Sigmoid colon (tissue), 7 donors: ENCODE measurements at regions of chr17 and their contacts with region 1.

Region 1: DNA sequence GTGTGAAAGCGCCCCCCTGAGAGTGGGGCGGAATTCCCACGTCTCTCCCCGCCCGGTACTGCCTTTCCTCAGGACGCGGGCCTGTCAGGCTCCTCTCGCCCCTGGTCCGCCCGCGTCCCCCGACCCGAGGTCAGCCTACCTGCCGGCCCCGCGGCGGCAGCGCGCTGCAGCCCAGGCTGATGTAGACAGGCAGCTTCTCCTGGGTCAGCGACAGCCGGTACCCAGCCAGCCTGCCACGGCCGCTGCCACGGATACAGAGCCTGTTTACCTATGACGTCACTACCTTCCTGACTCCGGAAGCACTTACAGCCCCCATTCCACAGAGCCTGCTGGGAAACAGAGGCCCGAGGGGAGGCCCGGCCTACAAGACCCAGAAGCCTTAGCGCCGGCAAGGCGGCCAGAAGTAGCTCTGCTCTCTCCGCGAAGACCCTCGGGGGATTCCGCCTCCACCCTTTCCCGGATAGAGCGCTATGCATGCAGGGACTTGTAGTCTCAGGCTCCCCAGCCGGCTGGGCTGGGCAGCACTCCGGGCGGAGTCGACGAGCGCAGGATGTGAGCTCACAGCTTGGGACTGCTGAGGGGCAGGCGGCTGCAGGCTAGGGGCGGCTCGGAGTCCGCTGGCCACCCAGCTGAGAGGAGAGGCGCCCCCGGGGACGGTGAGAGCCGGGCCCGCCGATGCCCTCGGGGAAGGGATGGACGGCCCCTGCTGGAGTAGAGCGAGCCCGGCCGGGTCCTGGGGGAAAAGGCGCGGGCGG is at the starts of genes IFT20 and TNFAIP1:
- DNase-seq: peak; percentile 100
- H3K4me3 ChIP-seq: peak within 1 kb of the TSS; percentile 72 to 99 (median 81)
- H3K27ac ChIP-seq: peak within 1 kb of the TSS; percentile 93 to 95 (median 94)
- H3K4me1 ChIP-seq: peaks cover 0 to 48% (median 41%) of the 10 kb centered on the region in 4 donors
- H3K27me3 ChIP-seq: no peaks in the 10 kb centered on the region
- CTCF ChIP-seq: no peak
- EP300 ChIP-seq: peak in 1 of 4 donors; percentile 66
- POLR2A ChIP-seq: peak; percentile 85 to 92
- total RNA-seq, gene IFT20: 48.5 to 73.6 (median 58.1) TPM
- total RNA-seq, gene TNFAIP1: 14.6 to 20.8 (median 17.1) TPM

Region 2: GRCh38 chr17:27466743-27467375 is 868.5 kb before region 1 on chr17:
- intact Hi-C with region 1: no loop called
- DNase-seq: no peak
- H3K4me3 ChIP-seq: no peak overlapping the region
- H3K27ac ChIP-seq: peak overlapping the region in 1 of 4 donors; percentile 14
- H3K4me1 ChIP-seq: peaks cover 0 to 4% (median under 1%) of the 10 kb centered on the region in 4 donors
- H3K27me3 ChIP-seq: no peaks in the 10 kb centered on the region
- CTCF ChIP-seq: no peak
- EP300 ChIP-seq: no peak
- POLR2A ChIP-seq: no peak

Region 3: GRCh38 chr17:28318759-28319660 is 16.4 kb before region 1 on chr17 and contains the start of gene TMEM97:
- intact Hi-C with region 1: loop called (anchors 2 kb)
- DNase-seq: peak; percentile 98
- H3K4me3 ChIP-seq: peak within 1 kb of the TSS; percentile 51 to 68 (median 58)
- H3K27ac ChIP-seq: peak within 1 kb of the TSS; percentile 64 to 79 (median 76)
- H3K4me1 ChIP-seq: peaks cover 0 to 22% (median 19%) of the 10 kb centered on the region in 4 donors
- H3K27me3 ChIP-seq: no peaks in the 10 kb centered on the region
- CTCF ChIP-seq: no peak
- EP300 ChIP-seq: no peak
- POLR2A ChIP-seq: no peak
- total RNA-seq, gene TMEM97: 5.8 to 10.9 (median 9.2) TPM

Region 4: DNA sequence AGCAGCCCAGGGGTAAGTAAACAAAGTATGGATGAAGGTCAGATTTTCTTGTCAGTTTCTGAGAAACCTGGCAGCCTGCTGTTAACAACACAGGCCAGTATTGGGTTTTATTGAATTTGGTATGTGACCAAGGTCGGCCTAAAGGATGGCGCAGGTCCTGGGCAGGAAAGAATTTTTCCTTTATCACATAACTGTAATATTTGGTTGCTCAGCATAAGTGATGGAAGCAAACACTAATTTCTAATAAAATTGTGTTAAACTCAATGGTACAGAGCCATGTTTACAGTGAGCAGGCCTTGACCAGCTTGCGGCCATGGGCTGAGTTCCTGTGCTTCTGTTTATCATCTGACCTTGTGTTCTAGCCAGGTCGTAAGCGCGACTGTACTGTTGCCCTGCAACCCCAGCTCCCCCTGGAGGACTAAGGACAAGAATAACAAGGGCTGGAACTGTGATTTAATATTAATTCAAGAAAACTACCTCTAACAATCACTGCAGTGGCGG is 11.4 kb after region 1 on chr17:
- intact Hi-C with region 1: no loop called
- DNase-seq: no peak
- H3K4me3 ChIP-seq: no peak overlapping the region
- H3K27ac ChIP-seq: peak overlapping the region in 2 of 4 donors; percentile 24 to 40
- H3K4me1 ChIP-seq: peaks cover 0 to 11% (median 0%) of the 10 kb centered on the region in 4 donors
- H3K27me3 ChIP-seq: no peaks in the 10 kb centered on the region
- CTCF ChIP-seq: no peak
- EP300 ChIP-seq: no peak
- POLR2A ChIP-seq: no peak

Region 5: DNA sequence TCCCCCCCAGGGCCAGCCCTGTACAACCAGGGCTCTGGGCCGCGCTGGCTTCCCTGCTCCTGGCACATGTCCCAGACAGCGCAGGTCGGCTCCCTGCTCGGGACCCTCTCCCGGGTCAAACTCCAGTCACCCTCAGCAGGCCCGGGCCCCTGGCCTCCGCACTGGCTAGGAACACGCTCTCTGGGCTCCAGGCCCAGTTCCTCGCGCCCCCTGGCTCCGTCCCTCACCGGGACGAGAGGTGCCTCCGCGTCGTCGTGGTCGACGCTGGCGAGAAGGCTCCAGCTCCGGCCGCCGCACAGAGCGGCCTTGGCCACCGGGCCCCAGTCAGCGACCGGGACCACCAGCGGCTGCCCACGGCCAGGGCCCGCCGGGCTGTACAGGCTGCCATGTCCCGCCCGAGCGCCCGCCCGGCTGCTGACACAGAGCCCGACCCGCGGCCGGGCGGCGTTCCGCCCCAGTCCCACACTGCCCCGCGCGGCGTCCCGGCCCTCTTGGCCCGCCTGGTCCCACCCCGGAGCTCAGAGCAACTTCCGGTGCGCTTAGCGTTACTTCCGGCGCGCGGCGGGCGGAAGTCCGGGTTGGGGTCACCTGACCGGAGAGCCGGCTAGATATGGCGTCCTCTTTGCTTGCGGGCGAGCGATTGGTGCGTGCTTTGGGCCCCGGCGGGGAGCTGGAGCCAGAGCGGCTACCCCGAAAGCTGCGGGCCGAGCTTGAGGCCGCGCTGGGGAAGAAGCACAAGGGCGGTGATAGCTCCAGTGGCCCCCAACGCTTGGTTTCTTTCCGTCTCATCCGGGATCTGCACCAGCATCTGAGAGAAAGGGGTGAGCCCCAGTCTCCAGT is 21.9 kb after region 1 on chr17 and contains the start of gene POLDIP2:
- intact Hi-C with region 1: loop called (anchors 1 kb)
- DNase-seq: peak; percentile 98
- H3K4me3 ChIP-seq: peak within 1 kb of the TSS; percentile 69 to 99 (median 89)
- H3K27ac ChIP-seq: peak within 1 kb of the TSS; percentile 85 to 97 (median 92)
- H3K4me1 ChIP-seq: peaks cover 0 to 33% (median 26%) of the 10 kb centered on the region in 4 donors
- H3K27me3 ChIP-seq: no peaks in the 10 kb centered on the region
- CTCF ChIP-seq: no peak
- EP300 ChIP-seq: peak in 1 of 4 donors; percentile 70
- POLR2A ChIP-seq: peak; percentile 67 to 71
- total RNA-seq, gene POLDIP2: 55.8 to 65.6 (median 59.3) TPM

Region 6: GRCh38 chr17:28405632-28406472 is 70.5 kb after region 1 on chr17 and contains the start of gene SLC46A1:
- intact Hi-C with region 1: no loop called
- DNase-seq: peak; percentile 81
- H3K4me3 ChIP-seq: peak within 1 kb of the TSS; percentile 52 to 84 (median 73)
- H3K27ac ChIP-seq: peak within 1 kb of the TSS; percentile 54 to 67 (median 55)
- H3K4me1 ChIP-seq: peaks cover 0 to 21% (median 19%) of the 10 kb centered on the region in 4 donors
- H3K27me3 ChIP-seq: no peaks in the 10 kb centered on the region
- CTCF ChIP-seq: no peak
- EP300 ChIP-seq: no peak
- POLR2A ChIP-seq: no peak
- total RNA-seq, gene SLC46A1: 2.7 to 8.6 (median 5.1) TPM

Region 7: DNA sequence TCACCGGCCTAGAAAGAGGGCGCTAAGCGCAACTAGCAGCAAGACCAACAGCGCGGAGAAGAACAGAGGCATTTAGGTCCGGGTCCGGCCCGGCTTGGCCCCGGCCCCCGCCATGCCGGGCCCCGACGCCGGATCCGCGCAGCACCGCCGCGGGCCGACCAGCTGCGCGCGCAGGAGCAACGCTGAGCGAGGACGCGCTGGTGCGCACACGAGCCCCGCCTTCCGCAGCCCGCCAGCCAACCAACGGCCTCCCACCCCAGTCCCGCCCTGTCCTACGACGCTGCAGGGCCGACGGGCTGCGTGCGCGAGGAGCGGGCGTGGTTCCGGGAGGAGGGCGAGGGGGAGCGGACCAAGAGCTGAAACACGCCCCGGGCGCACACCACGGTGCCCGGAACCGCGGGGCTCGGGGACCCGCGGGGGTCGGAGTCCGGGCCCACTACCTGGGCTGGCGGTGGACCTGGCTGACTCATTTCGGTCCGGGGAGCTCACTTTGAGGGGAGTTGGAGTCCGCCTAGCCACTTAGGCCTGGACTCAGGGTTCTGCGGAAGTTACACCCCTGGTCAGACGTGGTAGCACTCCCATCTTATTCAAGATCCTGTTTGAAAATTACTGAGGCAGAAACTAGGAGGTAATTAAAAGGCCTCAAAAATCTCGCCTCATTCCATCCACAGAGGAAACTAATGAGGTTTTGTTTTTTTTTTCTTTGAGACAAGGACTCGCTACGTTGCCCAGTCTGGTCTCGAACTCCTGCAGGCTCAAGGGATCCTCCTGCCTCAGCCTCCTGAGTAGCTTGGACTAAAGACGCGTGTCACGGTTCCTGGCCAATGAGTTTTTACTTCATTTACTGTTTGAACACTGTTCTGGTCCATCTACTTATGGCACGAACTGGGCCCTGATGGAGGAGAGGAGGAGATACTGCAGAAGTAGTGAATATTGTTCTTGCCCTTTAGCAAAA is 309.9 kb after region 1 on chr17 and contains the start of gene BLTP2:
- intact Hi-C with region 1: no loop called
- DNase-seq: peak; percentile 98
- H3K4me3 ChIP-seq: peak within 1 kb of the TSS; percentile 94 to 99 (median 98)
- H3K27ac ChIP-seq: peak within 1 kb of the TSS; percentile 91 to 97 (median 95)
- H3K4me1 ChIP-seq: peaks cover 0 to 40% (median 32%) of the 10 kb centered on the region in 4 donors
- H3K27me3 ChIP-seq: no peaks in the 10 kb centered on the region
- CTCF ChIP-seq: peak in 1 of 4 experiments; percentile 37
- EP300 ChIP-seq: no peak
- POLR2A ChIP-seq: peak; percentile 68 to 88
- total RNA-seq, gene BLTP2: 71.0 to 84.5 (median 80.3) TPM

Region 8: GRCh38 chr17:28951991-28952975 is 616.9 kb after region 1 on chr17:
- intact Hi-C with region 1: loop called (anchors 5 kb)
- DNase-seq: peak; percentile 99
- H3K4me3 ChIP-seq: peak overlapping the region; percentile 40 to 96 (median 74)
- H3K27ac ChIP-seq: peak overlapping the region; percentile 90 to 97 (median 94)
- H3K4me1 ChIP-seq: peaks cover 0 to 27% (median 14%) of the 10 kb centered on the region in 4 donors
- H3K27me3 ChIP-seq: no peaks in the 10 kb centered on the region
- CTCF ChIP-seq: no peak
- EP300 ChIP-seq: peak in 1 of 4 donors; percentile 52
- POLR2A ChIP-seq: peak in 1 of 2 donors; percentile 4